ENCODE measurements at regions of chr7 and their contacts with region 1.

Region 1: DNA sequence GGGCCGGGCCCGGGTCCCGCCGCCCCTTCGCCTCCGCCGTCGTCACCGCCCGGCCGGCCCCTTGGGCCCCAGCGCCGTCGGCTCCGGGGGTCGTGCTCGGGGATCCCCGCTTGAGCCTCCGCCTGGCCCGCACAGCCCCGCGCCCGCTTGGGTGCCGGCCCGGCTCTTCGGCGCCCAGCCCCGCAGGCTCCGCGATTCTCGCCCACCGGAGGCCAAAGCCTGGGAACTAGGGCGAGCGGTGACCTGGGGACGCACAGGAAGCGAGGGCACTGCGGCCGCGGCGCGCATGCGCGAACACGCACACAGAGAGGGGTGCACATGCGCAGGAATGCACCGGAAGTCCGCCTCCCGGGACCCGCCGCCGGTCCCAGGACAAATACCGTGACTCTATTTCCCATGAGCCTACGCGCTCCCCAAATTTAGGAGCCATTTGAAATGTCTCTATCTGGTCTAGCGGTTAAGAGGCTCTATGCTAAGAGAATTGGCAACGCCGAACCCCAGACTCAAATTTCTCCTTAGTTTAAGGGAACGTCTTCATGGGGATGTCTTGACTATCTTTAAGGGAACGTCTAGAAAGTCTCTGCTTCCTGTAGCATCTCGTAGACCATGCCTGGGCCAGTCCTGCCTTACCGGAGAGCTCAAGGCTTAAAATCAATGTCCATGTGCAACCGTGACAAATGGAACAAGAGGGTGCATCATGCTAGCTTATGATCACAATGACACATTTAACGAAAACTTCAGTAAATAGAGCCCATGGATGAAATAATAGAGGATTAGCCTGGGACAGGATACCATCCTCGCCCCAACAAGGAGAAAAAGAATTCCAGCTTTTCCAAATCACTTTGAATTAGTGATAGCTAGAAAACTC is at the start of gene ZNF12:
- H3K4me3 Mint-ChIP-seq: peak within 1 kb of the TSS; percentile 92
- H3K27ac Mint-ChIP-seq: peak within 1 kb of the TSS; percentile 88
- H3K4me1 Mint-ChIP-seq: peaks cover 37% of the 10 kb centered on the region
- H3K27me3 Mint-ChIP-seq: peaks cover 27% of the 10 kb centered on the region

Region 2: DNA sequence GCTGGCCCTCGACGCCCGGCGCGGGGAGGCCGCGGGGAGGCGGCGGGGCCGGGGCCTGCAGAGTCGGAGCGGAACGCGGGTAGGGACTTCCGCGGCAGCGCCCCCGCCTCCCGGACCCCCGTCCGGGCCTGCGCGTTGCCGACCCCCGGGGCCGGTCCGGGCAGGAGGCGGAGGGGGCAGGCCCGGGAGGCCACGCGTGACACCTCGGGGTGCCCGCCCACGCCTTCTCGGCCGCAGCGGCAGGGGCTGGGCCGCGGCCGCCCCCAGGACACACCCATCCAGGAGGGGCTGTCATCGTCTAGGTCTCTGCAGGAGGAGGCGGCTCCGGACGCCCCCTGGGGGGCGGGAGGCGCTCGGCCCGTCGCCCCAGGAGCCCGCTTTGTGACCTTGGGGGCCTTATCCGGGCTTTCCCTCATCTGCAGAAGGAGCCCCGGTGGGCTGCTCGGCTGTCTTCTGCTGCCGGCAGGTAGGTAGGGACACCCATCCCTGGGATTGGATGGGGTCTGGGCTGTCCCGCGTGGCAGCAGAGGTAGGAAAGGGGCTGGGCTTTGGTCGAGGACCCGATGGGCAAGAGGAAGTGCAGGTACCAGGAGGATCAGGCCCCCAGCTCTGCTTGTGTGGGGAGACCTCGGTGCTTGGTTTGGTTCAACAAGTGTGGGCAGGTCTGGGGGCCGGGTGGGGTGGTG is 69.2 kb before region 1 on chr7:
- intact Hi-C with region 1: loop called (anchors 1 kb)
- H3K4me3 Mint-ChIP-seq: peak overlapping the region; percentile 89
- H3K27ac Mint-ChIP-seq: peak overlapping the region; percentile 75
- H3K4me1 Mint-ChIP-seq: peaks cover 47% of the 10 kb centered on the region
- H3K27me3 Mint-ChIP-seq: no peaks in the 10 kb centered on the region

Region 3: DNA sequence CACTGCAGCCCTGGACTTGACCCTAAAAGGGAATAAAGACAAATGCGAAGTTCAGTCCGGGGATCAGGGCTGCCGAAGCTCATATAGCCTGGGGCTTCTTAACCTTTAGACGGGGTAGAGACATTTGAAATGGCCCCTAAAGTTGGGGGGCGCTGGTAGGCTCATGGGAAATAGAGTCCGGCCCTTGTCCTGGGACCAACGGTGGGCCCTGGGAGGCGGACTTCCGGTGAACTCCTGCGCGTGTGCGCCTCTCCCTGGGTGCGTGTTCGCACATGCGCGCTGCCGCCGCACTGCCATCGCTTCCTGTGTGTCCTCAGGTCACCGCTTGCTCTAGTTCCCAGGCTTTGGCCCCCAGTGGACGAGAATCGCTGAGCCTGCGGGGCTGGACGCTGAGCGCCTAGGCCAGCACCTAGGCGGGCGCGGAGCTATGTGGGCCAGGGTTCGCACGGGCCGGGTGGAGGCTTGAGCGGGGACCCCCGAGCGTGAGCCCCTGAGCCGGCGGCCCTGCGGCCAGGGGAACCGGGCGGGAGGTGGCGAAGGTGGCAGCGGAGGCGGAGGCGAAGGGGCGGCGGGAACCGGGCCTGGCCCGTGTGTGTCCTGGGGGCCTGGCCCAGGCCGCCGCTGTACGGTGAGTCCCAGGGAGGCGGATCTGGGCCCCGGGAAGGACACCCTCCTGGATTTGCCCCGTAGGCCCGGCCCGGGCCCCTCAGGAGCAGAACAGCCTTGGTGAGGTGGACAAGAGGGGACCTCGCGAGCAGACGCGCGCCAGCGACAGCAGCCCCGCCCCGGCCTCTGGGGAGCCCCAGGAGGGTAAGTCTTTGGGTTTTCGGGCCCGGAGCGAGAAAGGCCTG is 22.8 kb after region 1 on chr7:
- intact Hi-C with region 1: loop called (anchors 2 kb)
- H3K4me3 Mint-ChIP-seq: peak overlapping the region; percentile 85
- H3K27ac Mint-ChIP-seq: peak overlapping the region; percentile 82
- H3K4me1 Mint-ChIP-seq: peaks cover 33% of the 10 kb centered on the region
- H3K27me3 Mint-ChIP-seq: peaks cover 7% of the 10 kb centered on the region

Measured in dendritic cell treated with granulocyte-macrophage colony-stimulating factor and Interleukin-4, amounts not matched to agents 40 ng/mL and 50 ng/mL, for 4 days (primary cell).